Mammary epithelial cell (primary cell): ENCODE measurements at regions of chr5 and their contacts with region 1.

Region 1: GRCh38 chr5:145936401-145937131 is at the start of gene SH3RF2:
- DNase-seq: peak; percentile 85
- H3K4me3 ChIP-seq: peak within 1 kb of the TSS; percentile 58 to 83 (median 75)
- H3K27ac ChIP-seq: peak within 1 kb of the TSS; percentile 84
- H3K4me1 ChIP-seq: peaks cover 44% of the 10 kb centered on the region
- H3K27me3 ChIP-seq: no peaks in the 10 kb centered on the region
- CTCF ChIP-seq: no peak
- total RNA-seq, gene SH3RF2: 57.3 to 76.1 TPM

Region 2: DNA sequence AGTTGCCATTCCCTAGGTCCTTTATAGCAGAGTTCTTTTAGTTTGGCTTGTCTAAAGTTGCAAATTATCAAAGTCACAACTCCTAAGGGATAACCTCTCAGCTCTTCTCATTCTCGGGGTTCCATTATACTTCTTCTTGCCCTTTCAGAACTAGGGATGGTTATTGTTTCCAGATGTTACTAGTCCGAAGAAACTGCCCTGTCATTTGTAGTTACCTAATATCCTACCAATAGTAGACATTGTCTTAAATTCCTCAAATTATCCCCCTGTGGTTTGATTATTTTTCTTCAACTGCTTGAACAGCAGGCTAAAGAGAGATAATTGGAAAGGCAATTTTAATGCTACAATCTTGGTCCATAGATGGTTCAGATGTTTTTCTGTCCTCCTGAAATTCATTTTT is 1056.1 kb before region 1 on chr5:
- CTCF ChIA-PET with region 1: no interaction called
- dilution Hi-C with region 1: no loop called
- in situ Hi-C with region 1: no loop called
- intact Hi-C with region 1: no loop called
- DNase-seq: no peak
- H3K4me3 ChIP-seq: no peak overlapping the region
- H3K27ac ChIP-seq: no peak overlapping the region
- H3K4me1 ChIP-seq: no peaks in the 10 kb centered on the region
- H3K27me3 ChIP-seq: no peaks in the 10 kb centered on the region
- CTCF ChIP-seq: no peak

Region 3: GRCh38 chr5:145834917-145835847 is 101.4 kb before region 1 on chr5 and contains the start of gene PRELID2:
- CTCF ChIA-PET with region 1: no interaction called
- dilution Hi-C with region 1: no loop called
- in situ Hi-C with region 1: no loop called
- intact Hi-C with region 1: loop called (anchors 2 kb)
- DNase-seq: peak; percentile 84
- H3K4me3 ChIP-seq: peak within 1 kb of the TSS; percentile 61 to 67 (median 67)
- H3K27ac ChIP-seq: peak within 1 kb of the TSS; percentile 40
- H3K4me1 ChIP-seq: peaks cover 10% of the 10 kb centered on the region
- H3K27me3 ChIP-seq: no peaks in the 10 kb centered on the region
- CTCF ChIP-seq: peak in 1 of 2 donors; percentile 18
- total RNA-seq, gene PRELID2: 12.1 to 15.8 TPM

Region 4: DNA sequence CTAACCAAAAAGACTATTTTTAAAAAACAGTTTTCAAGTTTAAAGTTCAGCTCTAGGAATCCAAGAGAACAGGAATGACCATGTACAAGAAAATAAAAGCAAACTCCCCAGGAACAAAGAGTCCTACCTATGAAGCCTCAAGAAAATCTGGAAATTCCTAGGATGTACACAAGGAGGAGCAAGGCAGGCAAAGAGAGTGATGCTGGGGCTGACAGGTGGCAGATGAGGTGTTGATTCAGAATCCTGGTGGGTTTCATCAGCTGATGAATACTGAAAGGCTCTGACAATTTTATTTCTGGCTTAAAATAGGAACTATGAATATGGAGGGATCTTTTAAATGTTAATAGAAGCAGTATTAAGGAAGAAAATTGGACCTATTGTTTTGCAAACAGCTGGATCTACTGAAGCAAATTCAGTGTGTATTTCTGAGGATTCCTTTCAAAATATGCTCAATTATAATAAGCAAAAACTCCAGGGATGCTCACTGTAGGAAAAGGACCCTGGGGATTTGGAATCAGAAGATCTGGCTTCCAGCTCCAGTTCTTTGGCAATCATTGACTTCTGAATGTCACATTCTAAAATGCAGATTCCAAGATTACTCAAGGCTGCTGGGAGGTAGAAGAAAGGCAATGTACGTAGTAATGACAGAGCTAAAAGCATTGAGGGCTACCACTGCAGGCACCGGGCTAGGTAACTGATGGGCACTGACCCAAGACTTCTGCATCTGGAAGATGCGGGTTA is 28.2 kb before region 1 on chr5:
- CTCF ChIA-PET with region 1: no interaction called
- dilution Hi-C with region 1: no loop called
- in situ Hi-C with region 1: no loop called
- intact Hi-C with region 1: loop called (anchors 1 kb)
- DNase-seq: no peak
- H3K4me3 ChIP-seq: no peak overlapping the region
- H3K27ac ChIP-seq: no peak overlapping the region
- H3K4me1 ChIP-seq: no peaks in the 10 kb centered on the region
- H3K27me3 ChIP-seq: no peaks in the 10 kb centered on the region
- CTCF ChIP-seq: peak; percentile 20 to 64

Region 5: GRCh38 chr5:145925353-145925752 is 11.2 kb before region 1 on chr5:
- CTCF ChIA-PET with region 1: no interaction called
- dilution Hi-C with region 1: no loop called
- in situ Hi-C with region 1: no loop called
- intact Hi-C with region 1: loop called (anchors 1 kb)
- DNase-seq: peak; percentile 74
- H3K4me3 ChIP-seq: no peak overlapping the region
- H3K27ac ChIP-seq: peak overlapping the region; percentile 96
- H3K4me1 ChIP-seq: peaks cover 51% of the 10 kb centered on the region
- H3K27me3 ChIP-seq: no peaks in the 10 kb centered on the region
- CTCF ChIP-seq: no peak

Region 6: GRCh38 chr5:145975361-145976066 is 38.9 kb after region 1 on chr5:
- CTCF ChIA-PET with region 1: no interaction called
- dilution Hi-C with region 1: loop called (anchors 5 kb)
- in situ Hi-C with region 1: no loop called
- intact Hi-C with region 1: loop called (anchors 2 kb)
- DNase-seq: peak; percentile 93
- H3K4me3 ChIP-seq: no peak overlapping the region
- H3K27ac ChIP-seq: peak overlapping the region; percentile 88
- H3K4me1 ChIP-seq: peaks cover 38% of the 10 kb centered on the region
- H3K27me3 ChIP-seq: no peaks in the 10 kb centered on the region
- CTCF ChIP-seq: no peak

Region 7: GRCh38 chr5:146027751-146028150 is 91.2 kb after region 1 on chr5:
- CTCF ChIA-PET with region 1: no interaction called
- dilution Hi-C with region 1: loop called (anchors 5 kb)
- in situ Hi-C with region 1: no loop called
- intact Hi-C with region 1: no loop called
- DNase-seq: peak; percentile 91
- H3K4me3 ChIP-seq: no peak overlapping the region
- H3K27ac ChIP-seq: peak overlapping the region; percentile 50
- H3K4me1 ChIP-seq: peaks cover 21% of the 10 kb centered on the region
- H3K27me3 ChIP-seq: no peaks in the 10 kb centered on the region
- CTCF ChIP-seq: no peak

Region 8: DNA sequence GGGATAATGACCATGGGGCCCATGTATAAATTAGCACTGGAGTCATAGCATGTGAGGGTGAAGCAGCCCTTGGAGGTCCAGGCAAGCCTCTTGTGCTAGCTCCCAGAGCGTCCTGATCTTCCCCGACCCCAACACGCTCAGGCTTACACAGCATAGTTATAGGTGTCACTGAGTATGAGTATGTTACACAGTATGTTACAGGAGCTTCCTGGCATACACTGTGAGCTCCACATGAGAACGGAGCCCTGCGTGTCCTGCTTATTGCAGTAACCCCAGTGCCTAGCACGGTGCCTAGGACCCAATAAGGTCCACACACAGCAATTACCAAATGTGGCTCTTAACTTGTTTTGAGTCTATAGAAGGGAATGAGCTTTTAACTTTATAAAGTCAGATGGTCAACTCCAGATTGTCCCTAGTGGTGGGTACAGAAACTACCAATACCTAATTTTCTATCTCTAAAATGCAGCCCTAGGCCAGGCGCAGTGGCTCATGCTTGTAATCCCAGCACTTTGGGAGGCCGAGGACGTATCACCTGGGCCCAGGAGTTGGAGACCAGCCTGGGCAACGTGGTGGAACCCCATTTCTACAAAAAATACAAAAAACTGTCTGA is 104.7 kb after region 1 on chr5:
- CTCF ChIA-PET with region 1: no interaction called
- dilution Hi-C with region 1: no loop called
- in situ Hi-C with region 1: no loop called
- intact Hi-C with region 1: loop called (anchors 1 kb)
- DNase-seq: no peak
- H3K4me3 ChIP-seq: no peak overlapping the region
- H3K27ac ChIP-seq: no peak overlapping the region
- H3K4me1 ChIP-seq: peaks cover 35% of the 10 kb centered on the region
- H3K27me3 ChIP-seq: no peaks in the 10 kb centered on the region
- CTCF ChIP-seq: peak; percentile 41 to 49

Region 9: DNA sequence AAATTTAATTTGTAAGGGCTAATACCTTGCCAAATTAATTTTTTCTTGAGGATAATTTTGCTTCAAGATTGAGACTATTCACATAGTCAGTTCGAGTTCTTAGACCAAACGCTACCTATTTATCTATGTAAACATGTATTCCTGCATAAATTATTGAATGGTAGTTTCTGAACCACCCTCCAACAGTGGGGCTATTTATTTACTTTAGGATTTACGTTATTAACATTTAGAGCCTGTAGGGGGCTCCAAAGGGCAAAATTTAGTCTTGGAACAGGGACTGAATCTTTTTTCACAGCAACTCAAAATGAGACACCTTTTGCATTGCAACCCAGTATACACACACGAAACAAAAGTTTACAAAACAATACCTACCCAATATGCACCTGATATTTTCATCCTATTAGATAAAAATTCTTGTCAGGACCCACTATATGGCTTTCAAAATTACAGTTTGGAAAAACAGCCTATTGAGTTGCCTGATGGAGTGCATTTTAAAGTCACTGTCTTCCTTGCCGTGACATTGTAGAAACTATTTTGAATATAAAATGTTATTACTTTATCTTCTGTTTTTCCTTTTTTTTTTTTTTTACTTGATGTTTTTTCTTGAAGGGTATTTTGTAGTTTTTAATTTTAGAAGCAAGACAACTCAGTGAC is 355.0 kb after region 1 on chr5:
- CTCF ChIA-PET with region 1: no interaction called
- dilution Hi-C with region 1: no loop called
- in situ Hi-C with region 1: no loop called
- intact Hi-C with region 1: no loop called
- DNase-seq: peak; percentile 26
- H3K4me3 ChIP-seq: no peak overlapping the region
- H3K27ac ChIP-seq: no peak overlapping the region
- H3K4me1 ChIP-seq: peaks cover 9% of the 10 kb centered on the region
- H3K27me3 ChIP-seq: no peaks in the 10 kb centered on the region
- CTCF ChIP-seq: peak; percentile 56 to 61